CD4-positive, alpha-beta memory T cell (primary cell): ENCODE measurements at regions of chr3 and their contacts with region 1.

Region 1: DNA sequence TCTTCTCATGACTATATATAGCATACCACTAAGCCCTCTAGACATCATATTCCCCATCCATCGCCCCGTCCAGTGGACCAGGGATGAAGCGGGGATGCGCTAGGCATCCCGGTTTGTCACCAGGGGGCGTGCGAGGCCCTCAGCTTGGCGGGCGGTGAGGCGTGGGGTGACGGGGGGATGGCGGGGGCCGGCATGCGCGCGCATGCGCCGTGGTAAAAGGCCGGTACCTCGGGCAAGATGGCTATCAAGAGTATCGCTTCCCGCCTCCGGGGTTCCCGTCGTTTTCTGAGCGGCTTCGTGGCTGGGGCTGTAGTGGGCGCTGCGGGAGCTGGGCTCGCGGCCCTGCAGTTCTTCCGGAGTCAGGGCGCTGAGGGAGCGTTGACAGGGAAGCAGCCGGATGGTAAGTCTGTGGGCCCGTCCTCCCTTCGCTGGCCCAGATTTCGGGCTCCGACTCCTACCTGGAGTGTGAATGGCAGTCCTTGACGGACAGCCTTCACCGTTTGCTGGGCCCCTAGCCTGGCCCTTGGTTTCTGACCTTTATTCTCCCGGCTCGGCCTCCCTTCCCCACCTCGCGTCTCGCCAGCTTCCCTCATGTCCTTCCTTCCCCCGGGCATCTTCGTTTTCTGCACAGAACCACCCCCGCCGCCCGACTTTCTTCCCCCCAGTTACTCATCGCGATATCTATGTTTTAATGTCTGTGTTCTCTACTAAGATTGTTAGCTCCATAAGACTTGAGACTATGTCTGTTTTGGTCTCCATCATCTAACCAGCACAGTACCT is at the start of gene EXOG:
- DNase-seq: peak; percentile 86 to 93 (median 88)
- H3K4me3 ChIP-seq: peak within 1 kb of the TSS; percentile 58 to 87
- H3K4me3 Mint-ChIP-seq: peak within 1 kb of the TSS; percentile 89 to 99 (median 94)
- H3K27ac ChIP-seq: peak within 1 kb of the TSS; percentile 69
- H3K27ac Mint-ChIP-seq: peak within 1 kb of the TSS; percentile 77 to 93 (median 91)
- H3K4me1 ChIP-seq: peaks cover 15% of the 10 kb centered on the region
- H3K4me1 Mint-ChIP-seq: peaks cover 13 to 29% (median 16%) of the 10 kb centered on the region in 4 donors
- H3K27me3 ChIP-seq: no peaks in the 10 kb centered on the region
- H3K27me3 Mint-ChIP-seq: no peaks in the 10 kb centered on the region
- total RNA-seq, gene EXOG: 29.3 to 33.3 TPM

Region 2: DNA sequence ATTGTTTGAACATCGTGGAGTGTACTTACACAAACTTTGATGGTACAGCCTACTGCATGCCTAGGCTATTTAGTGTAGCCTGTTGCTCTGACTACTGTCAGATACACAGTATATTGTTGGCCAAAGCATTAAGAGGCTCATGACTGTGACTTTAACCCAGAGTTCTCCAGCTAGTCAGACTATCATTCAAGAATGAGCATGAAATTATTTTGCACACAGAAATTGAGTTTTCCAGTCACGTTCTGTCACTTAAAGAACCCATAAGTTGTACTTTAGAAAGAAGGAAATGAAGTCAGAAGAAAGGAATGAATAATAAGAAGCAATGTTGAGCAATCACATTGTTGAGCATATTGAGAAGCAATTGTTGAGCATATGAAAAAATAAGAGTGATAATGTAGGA is 268.3 kb before region 1 on chr3:
- CTCF ChIA-PET with region 1: no interaction called
- POLR2A ChIA-PET with region 1: no interaction called
- intact Hi-C with region 1: no loop called
- DNase-seq: no peak
- H3K4me3 ChIP-seq: no peak overlapping the region
- H3K4me3 Mint-ChIP-seq: no peak overlapping the region
- H3K27ac ChIP-seq: no peak overlapping the region
- H3K27ac Mint-ChIP-seq: no peak overlapping the region
- H3K4me1 ChIP-seq: no peaks in the 10 kb centered on the region
- H3K4me1 Mint-ChIP-seq: no peaks in the 10 kb centered on the region
- H3K27me3 ChIP-seq: no peaks in the 10 kb centered on the region
- H3K27me3 Mint-ChIP-seq: no peaks in the 10 kb centered on the region

Region 3: DNA sequence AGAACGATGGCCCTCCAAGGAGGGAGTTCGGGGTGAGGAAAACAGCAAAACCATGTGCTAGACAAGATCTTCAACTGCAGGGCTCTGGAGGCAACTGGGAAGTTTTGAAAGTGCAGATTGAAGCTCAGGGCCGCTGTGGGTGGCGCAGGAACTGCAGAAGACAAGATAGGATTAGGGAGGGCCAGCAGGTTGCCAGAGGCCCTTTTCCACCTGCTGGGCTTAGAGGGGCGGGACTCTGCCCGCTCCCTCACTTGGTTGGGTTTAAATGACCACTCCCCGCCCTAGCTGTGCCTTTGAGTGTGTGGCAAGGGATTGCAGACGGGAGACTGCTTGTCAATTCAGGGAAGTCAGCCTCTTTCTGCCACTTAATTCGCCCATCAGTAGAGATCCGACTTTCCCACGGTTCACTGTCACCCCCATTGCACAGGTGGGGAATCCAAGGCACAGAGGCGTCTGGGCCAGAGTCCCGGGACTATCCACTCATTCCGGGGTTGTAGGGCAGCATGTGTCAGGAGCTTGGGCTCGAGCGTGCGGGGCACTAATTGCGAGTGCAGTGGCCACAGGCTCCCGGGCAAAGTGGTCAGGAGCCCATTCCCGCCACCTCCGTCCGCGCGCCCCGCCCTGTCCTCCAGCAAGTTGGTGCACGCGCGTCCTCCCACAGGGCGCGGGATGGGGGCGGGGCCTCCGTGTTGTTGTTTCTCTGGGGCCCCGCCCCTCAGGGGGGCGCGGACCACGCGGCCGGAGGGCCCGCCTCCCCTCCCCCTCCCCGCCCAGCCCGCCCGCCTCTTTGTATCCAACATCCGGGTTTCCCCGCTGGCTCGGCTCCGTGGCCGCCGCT is 43.0 kb before region 1 on chr3 and contains the start of gene ACVR2B:
- CTCF ChIA-PET with region 1: interaction called, 6 read pairs
- POLR2A ChIA-PET with region 1: interaction called, 10 read pairs
- intact Hi-C with region 1: loop called (anchors 1 kb)
- DNase-seq: peak; percentile 56 to 62 (median 57)
- H3K4me3 ChIP-seq: peak within 1 kb of the TSS; percentile 72 to 78
- H3K4me3 Mint-ChIP-seq: peak within 1 kb of the TSS; percentile 96 to 100 (median 97)
- H3K27ac ChIP-seq: peak within 1 kb of the TSS; percentile 31
- H3K27ac Mint-ChIP-seq: peak within 1 kb of the TSS; percentile 41 to 95 (median 92)
- H3K4me1 ChIP-seq: peaks cover 17% of the 10 kb centered on the region
- H3K4me1 Mint-ChIP-seq: peaks cover 10 to 39% (median 19%) of the 10 kb centered on the region in 4 donors
- H3K27me3 ChIP-seq: no peaks in the 10 kb centered on the region
- H3K27me3 Mint-ChIP-seq: no peaks in the 10 kb centered on the region
- total RNA-seq, gene ACVR2B: 12.3 to 13.2 TPM

Region 4: DNA sequence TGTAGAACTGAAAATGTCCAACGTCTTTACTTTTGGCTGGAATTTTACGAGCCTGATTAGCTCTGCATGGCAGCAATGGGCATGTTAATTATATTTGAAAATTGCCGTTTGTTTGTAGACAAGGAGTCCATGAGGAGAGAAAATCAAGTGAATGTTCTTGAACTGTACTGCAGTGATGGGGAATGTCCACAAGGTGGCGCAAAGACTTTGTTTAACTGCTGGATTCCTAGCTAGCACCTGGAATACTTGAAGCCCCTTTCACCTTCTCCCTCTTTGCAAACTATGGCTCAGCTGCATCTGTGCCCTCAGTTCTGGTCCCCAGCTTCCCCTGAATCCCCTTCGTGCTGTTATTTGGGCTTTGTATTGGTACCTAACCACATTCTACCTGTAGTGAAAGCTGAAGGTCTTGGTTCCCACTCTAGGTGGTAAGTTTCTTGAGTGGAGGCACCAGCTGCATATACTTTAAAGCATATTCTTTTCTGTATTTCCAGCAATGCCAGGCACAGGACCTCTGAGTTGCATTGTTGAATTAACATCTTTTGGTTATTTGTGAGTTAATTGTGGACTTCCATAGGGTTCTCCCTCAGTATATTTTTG is 25.2 kb after region 1 on chr3:
- CTCF ChIA-PET with region 1: interaction called, 75 read pairs
- POLR2A ChIA-PET with region 1: interaction called, 13 read pairs
- intact Hi-C with region 1: loop called (anchors 1 kb)
- DNase-seq: peak; percentile 54 to 63 (median 61)
- H3K4me3 ChIP-seq: no peak overlapping the region
- H3K4me3 Mint-ChIP-seq: peak overlapping the region in 3 of 8 donors; percentile 3 to 75 (median 41)
- H3K27ac ChIP-seq: no peak overlapping the region
- H3K27ac Mint-ChIP-seq: peak overlapping the region in 6 of 7 donors; percentile 43 to 87 (median 62)
- H3K4me1 ChIP-seq: peaks cover 31% of the 10 kb centered on the region
- H3K4me1 Mint-ChIP-seq: peaks cover 27 to 36% (median 33%) of the 10 kb centered on the region in 4 donors
- H3K27me3 ChIP-seq: no peaks in the 10 kb centered on the region
- H3K27me3 Mint-ChIP-seq: no peaks in the 10 kb centered on the region

Region 5: DNA sequence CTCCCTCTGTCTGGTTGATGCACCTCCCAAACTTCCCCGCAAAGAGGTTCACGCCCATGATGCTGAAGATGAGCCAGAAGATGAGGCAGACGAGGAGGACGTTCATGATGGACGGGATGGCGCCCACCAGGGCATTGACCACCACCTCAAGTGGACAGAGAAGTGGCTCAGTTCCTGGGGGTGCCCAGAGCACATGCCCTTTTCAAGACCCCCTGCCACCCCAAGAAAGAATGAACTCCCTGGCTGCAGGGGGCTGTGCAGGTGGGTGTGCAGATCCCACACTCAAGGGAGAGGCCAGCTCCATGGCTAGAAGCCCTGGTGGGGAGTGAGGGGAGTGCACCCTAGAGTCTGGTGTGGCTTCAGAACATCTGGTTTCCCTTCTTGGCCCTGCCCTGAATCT is 64.0 kb after region 1 on chr3:
- CTCF ChIA-PET with region 1: no interaction called
- POLR2A ChIA-PET with region 1: no interaction called
- intact Hi-C with region 1: no loop called
- DNase-seq: no peak
- H3K4me3 ChIP-seq: no peak overlapping the region
- H3K4me3 Mint-ChIP-seq: no peak overlapping the region
- H3K27ac ChIP-seq: no peak overlapping the region
- H3K27ac Mint-ChIP-seq: no peak overlapping the region
- H3K4me1 ChIP-seq: no peaks in the 10 kb centered on the region
- H3K4me1 Mint-ChIP-seq: no peaks in the 10 kb centered on the region
- H3K27me3 ChIP-seq: no peaks in the 10 kb centered on the region
- H3K27me3 Mint-ChIP-seq: peaks cover 0 to 3% of the 10 kb centered on the region in 2 donors

Region 6: GRCh38 chr3:38843898-38844297 is 347.6 kb after region 1 on chr3:
- CTCF ChIA-PET with region 1: no interaction called
- POLR2A ChIA-PET with region 1: no interaction called
- intact Hi-C with region 1: loop called (anchors 10 kb)
- DNase-seq: no peak
- H3K4me3 ChIP-seq: no peak overlapping the region
- H3K4me3 Mint-ChIP-seq: no peak overlapping the region
- H3K27ac ChIP-seq: no peak overlapping the region
- H3K27ac Mint-ChIP-seq: no peak overlapping the region
- H3K4me1 ChIP-seq: no peaks in the 10 kb centered on the region
- H3K4me1 Mint-ChIP-seq: no peaks in the 10 kb centered on the region
- H3K27me3 ChIP-seq: no peaks in the 10 kb centered on the region
- H3K27me3 Mint-ChIP-seq: peaks cover 7 to 12% of the 10 kb centered on the region in 2 donors

Region 7: DNA sequence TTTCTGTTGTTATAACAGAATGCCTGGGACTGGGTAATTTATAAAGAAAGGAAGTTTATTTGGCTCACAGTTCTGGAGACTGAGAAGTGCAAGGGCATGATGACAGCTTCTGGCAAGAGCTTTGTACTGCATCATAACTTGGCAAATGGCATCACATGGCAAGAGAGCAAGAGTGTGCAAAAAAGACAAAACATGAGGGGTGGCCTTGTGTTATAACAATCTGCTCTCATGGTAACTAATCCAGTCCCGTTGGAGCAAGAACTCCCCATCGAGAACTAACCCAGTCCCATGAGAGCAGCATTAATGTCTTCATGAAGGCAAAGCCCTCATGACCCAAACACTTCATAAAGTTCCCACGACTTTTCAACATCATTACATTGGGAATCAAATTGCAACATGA is 532.2 kb after region 1 on chr3:
- CTCF ChIA-PET with region 1: no interaction called
- POLR2A ChIA-PET with region 1: no interaction called
- intact Hi-C with region 1: loop called (anchors 1 kb)
- DNase-seq: no peak
- H3K4me3 ChIP-seq: no peak overlapping the region
- H3K4me3 Mint-ChIP-seq: no peak overlapping the region
- H3K27ac ChIP-seq: no peak overlapping the region
- H3K27ac Mint-ChIP-seq: no peak overlapping the region
- H3K4me1 ChIP-seq: no peaks in the 10 kb centered on the region
- H3K4me1 Mint-ChIP-seq: peaks cover 0 to 3% (median 0%) of the 10 kb centered on the region in 4 donors
- H3K27me3 ChIP-seq: no peaks in the 10 kb centered on the region
- H3K27me3 Mint-ChIP-seq: peaks cover 11 to 18% of the 10 kb centered on the region in 2 donors